ENCODE measurements at regions of chr20 and their contacts with region 1.

Region 1: GRCh38 chr20:5569021-5569420 is 181.2 kb upstream of the SHLD1 start:
- DNase-seq: no peak
- CTCF ChIP-seq: peak; percentile 31

Region 2: GRCh38 chr20:5150226-5151076 is 418.6 kb before region 1 on chr20:
- CTCF ChIA-PET with region 1: no interaction called
- POLR2A ChIA-PET with region 1: no interaction called
- DNase-seq: no peak
- CTCF ChIP-seq: no peak

Region 3: DNA sequence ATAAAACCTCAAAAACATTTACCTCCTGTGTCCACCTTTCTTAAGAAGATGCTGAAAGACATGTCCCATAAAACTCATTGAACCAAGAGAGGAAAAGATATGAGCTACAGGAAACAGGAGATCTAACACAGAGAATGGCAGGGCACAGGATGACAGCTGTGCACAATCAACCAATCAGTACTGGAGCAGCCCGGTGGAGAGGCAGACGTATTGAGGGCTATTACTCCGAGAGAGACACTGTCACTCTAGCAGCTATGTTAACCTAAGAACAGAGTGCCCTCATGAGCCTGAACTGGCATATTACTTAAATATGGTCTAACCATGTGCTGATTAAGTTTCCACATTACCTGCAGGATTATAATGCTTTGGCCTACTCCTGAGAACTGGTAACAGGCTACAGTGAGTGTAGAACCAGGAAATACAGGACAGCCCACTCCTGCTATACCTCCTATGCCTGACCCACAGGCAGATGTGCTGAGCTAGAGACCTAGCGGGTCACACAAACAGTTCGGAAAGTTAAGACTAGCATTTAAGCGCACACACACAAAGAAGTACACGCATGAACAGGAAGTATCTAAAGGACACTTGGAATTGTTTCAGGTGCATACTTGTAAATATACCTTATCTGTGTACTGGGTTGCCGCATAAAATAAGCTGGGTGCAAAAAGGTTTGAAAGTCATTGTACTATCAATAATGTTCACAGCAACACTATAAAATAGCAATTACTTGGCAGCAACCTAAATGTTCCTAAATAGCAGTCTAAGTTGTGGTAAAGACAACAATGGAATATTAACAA is 18.1 kb before region 1 on chr20:
- CTCF ChIA-PET with region 1: interaction called, 17 read pairs
- POLR2A ChIA-PET with region 1: no interaction called
- DNase-seq: no peak
- CTCF ChIP-seq: no peak

Region 4: GRCh38 chr20:5557123-5557522 is 11.9 kb before region 1 on chr20:
- CTCF ChIA-PET with region 1: interaction called, 63 read pairs
- POLR2A ChIA-PET with region 1: interaction called, 4 read pairs
- DNase-seq: peak; percentile 50
- CTCF ChIP-seq: peak; percentile 69

Region 5: DNA sequence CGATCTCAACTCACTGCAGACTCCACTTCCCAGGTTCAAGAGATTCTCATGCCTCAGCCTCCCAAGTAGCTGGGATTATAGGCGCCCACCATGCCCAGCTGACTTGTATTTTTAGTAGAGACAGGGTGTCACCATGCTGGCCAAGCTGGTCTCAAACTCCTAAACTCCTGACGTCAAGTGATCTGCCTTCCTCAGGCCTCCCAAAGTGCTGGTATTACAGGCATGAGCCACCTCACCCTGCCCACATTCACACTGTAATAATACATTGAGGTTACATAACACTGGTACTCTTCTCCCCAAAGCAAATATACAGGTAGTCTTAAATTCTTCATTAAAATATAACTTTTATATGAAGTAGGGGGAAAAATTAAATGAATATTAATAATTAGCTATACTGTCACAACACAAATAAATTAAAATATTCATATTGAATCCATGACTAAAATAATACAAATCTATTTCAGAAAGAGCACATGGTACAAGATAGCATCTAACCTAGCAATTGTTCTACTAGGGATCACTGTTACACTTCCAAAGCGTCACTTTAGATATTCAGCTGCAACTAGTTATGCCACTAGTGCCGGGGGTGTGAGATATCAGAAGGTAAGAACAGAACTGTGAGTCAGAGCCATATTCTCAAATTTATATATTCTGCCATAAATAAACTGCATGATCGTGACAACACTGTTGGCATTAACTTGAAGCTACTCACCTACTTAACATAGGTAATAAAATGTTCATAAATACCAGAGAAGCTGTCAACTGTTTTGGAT is 12.1 kb after region 1 on chr20:
- CTCF ChIA-PET with region 1: interaction called, 25 read pairs
- POLR2A ChIA-PET with region 1: no interaction called
- DNase-seq: no peak
- CTCF ChIP-seq: no peak

Region 6: GRCh38 chr20:5633751-5634365 is 64.8 kb after region 1 on chr20:
- CTCF ChIA-PET with region 1: no interaction called
- POLR2A ChIA-PET with region 1: no interaction called
- DNase-seq: no peak
- CTCF ChIP-seq: no peak

Region 7: GRCh38 chr20:5871459-5872410 is 302.7 kb after region 1 on chr20:
- CTCF ChIA-PET with region 1: no interaction called
- POLR2A ChIA-PET with region 1: no interaction called
- DNase-seq: no peak
- CTCF ChIP-seq: no peak

Region 8: GRCh38 chr20:5882166-5882565 is 313.1 kb after region 1 on chr20:
- CTCF ChIA-PET with region 1: no interaction called
- POLR2A ChIA-PET with region 1: no interaction called
- DNase-seq: no peak
- CTCF ChIP-seq: no peak